Psoas muscle (tissue), 8 donors: ENCODE measurements at regions of chr17 and their contacts with region 1.

Region 1: DNA sequence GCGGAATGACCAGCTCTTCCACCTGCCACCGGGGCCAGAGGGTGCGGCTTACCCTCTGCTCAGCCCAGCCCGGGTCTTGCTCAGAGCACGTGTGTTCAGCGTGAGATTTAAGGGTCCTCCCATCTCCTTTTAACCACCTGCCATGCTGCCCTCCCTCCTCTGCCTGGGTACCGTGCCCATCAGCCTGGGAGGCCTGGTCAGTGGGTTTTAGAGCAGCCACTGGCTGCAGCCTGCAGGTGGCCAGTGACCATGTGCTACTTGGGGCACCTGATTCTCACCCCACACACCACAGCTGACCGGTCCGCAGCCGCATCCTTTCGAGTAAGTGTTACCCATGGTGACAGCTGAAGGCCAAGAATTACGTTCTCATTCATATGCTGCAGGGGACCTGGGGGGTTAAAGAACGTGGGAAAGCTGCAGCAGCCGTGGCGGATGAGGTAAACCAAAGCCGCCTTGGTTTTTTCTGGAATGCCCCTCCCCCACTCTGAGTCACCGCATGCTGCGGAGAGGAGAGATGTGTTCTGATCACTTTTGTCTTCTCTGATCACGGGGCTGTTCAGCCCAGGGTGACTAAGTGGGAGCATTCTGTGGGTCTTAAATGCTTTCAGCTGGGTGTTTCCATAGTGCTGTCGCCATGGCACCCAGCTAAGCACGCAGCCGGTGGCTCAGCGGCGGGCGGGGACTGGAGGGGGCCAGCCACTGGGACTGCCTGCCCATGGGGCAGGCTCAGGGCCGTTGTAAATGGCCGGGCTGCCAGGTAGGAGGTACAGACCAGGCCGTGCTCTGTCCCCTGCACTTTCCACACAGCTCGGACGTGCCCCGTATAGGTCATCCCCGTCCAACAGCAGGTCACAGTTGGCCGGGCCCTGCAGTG is 59.8 kb downstream of the BAIAP2 start:
- DNase-seq: peak; percentile 78 to 81
- ATAC-seq: peak; percentile 42 to 72 (median 65)
- H3K4me3 ChIP-seq: no peak overlapping the region
- H3K27ac ChIP-seq: peak overlapping the region; percentile 53
- H3K4me1 ChIP-seq: peaks cover 28% of the 10 kb centered on the region
- H3K27me3 ChIP-seq: peaks cover 0 to 8% (median 0%) of the 10 kb centered on the region in 3 donors
- CTCF ChIP-seq: no peak

Region 2: GRCh38 chr17:80886641-80887573 is 207.8 kb before region 1 on chr17:
- intact Hi-C with region 1: loop called in 1 of 2 experiments (anchors 10 kb)
- DNase-seq: peak in 1 of 2 donors; percentile 47
- ATAC-seq: no peak
- H3K4me3 ChIP-seq: no peak overlapping the region
- H3K27ac ChIP-seq: no peak overlapping the region
- H3K4me1 ChIP-seq: no peaks in the 10 kb centered on the region
- H3K27me3 ChIP-seq: no peaks in the 10 kb centered on the region
- CTCF ChIP-seq: no peak

Region 3: GRCh38 chr17:80991645-80992076 is 103.1 kb before region 1 on chr17 and contains the start of gene CHMP6:
- intact Hi-C with region 1: loop called in 1 of 2 experiments (anchors 2 kb)
- DNase-seq: peak; percentile 85 to 90
- ATAC-seq: peak; percentile 75 to 80 (median 78)
- H3K4me3 ChIP-seq: peak within 1 kb of the TSS; percentile 89
- H3K27ac ChIP-seq: peak within 1 kb of the TSS; percentile 85
- H3K4me1 ChIP-seq: peaks cover 17% of the 10 kb centered on the region
- H3K27me3 ChIP-seq: no peaks in the 10 kb centered on the region
- CTCF ChIP-seq: peak; percentile 29
- total RNA-seq, gene CHMP6: 32.0 to 36.9 (median 33.6) TPM